Dorsolateral prefrontal cortex (tissue), 120 donors: ENCODE measurements at regions of chr5 and their contacts with region 1.

Region 1: DNA sequence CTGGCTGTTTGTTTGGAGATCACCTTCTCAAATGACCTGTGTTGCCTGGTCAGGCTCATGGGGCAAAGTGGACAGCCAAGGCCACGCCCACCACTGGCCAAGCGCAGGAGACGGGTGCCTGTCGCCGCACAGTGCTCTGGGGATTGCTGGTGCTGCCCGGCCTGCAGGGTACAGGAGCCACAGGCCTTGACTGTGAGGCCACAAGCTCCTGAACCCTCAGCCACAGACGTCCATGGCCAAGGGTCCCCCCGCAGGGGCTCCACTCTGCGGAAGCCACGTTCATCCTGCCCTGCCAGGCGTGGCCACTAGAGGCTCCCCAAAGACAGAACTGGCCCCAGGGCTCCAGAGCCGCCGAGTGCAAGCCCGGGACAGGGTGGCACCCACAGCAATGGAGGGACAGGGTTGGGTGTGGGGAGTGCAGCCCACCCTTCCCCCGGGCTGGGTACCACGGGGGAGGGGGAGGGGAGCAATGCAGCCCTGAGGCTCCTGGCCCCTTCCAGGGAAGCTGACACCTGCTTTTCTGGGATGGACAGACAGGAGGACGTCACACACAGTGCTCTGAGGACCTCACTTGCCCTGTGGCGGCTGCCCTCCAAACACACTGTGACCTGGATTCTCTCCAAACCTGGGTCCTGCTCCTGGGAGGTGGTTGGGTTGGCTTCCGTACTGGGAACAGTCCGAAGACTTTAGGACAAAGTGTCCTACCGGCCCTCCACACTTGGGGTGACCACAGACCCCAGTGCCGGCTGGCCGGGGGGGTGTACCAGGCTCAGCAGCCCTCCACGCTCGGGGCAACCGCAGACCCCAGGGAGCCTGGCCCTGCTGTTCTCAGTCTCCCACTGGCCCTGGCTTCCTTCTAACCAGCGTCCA is 21.5 kb downstream of the TPPP start:
- DNase-seq: peak; percentile 76 to 87 (median 84)
- H3K4me3 ChIP-seq: peak overlapping the region in 44 of 59 donors; percentile 1 to 57 (median 32)
- H3K27ac ChIP-seq: peak overlapping the region; percentile 83 to 100 (median 99)
- H3K27me3 ChIP-seq: peaks cover 0 to 6% (median 0%) of the 10 kb centered on the region in 45 donors
- CTCF ChIP-seq: peak; percentile 64 to 95 (median 86)

Region 2: GRCh38 chr5:691817-692528 is 20.3 kb after region 1 on chr5:
- intact Hi-C with region 1: loop called in 1 of 2 experiments (anchors 2 kb)
- DNase-seq: no peak
- H3K4me3 ChIP-seq: peak overlapping the region in 58 of 59 donors; percentile 34 to 94 (median 66)
- H3K27ac ChIP-seq: peak overlapping the region in 45 of 59 donors; percentile 72 to 97 (median 84)
- H3K27me3 ChIP-seq: no peaks in the 10 kb centered on the region
- CTCF ChIP-seq: no peak

Region 3: DNA sequence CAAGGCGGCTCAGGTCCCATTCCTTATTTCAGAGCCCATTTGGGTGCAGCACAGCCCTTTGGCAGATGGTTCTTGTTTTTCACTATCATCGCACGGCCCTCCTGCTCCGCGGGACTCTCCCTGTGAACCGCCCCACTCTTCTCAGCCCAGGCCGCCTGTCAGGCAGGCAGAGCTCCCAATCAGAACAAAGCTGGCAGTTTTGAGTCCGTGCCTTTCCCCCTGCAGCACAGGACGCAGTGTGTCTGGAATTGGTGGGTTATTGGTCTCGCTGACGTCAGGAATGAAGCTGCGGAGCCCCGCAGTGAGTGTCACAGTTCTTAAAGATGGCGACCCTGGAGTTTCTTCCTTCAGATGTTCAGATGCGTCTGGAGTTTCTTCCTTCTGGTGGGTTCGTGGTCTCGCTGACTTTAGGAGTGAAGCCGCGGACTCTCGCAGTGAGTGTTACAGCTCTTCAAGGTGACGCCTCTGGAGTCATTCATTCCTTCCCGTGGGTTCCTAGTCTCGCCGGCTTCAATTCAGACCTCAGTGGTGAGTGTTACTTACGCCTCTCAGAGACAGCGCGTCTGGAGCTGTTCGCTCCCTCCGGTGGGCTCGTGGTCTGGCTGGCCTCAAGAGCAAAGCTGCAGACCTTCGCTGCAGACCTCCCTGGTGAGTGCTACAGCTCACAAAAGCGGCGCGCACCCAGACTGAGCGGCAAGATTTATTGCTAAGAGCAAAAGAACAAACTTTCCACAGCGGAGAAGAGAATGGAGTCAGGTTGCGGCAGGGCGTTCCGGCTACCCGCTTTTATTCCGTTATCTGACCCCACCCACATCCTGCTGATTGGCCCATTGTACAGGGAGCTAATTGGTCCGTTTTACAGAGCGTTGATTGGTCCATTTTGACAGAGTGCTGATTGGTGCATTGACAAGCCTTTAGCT is 105.4 kb after region 1 on chr5:
- intact Hi-C with region 1: loop called in 1 of 2 experiments (anchors 5 kb)
- DNase-seq: peak in 3 of 10 donors; percentile 27 to 45 (median 33)
- H3K4me3 ChIP-seq: no peak overlapping the region
- H3K27ac ChIP-seq: peak overlapping the region in 12 of 59 donors; percentile 2 to 67 (median 33)
- H3K27me3 ChIP-seq: no peaks in the 10 kb centered on the region
- CTCF ChIP-seq: no peak

Region 4: DNA sequence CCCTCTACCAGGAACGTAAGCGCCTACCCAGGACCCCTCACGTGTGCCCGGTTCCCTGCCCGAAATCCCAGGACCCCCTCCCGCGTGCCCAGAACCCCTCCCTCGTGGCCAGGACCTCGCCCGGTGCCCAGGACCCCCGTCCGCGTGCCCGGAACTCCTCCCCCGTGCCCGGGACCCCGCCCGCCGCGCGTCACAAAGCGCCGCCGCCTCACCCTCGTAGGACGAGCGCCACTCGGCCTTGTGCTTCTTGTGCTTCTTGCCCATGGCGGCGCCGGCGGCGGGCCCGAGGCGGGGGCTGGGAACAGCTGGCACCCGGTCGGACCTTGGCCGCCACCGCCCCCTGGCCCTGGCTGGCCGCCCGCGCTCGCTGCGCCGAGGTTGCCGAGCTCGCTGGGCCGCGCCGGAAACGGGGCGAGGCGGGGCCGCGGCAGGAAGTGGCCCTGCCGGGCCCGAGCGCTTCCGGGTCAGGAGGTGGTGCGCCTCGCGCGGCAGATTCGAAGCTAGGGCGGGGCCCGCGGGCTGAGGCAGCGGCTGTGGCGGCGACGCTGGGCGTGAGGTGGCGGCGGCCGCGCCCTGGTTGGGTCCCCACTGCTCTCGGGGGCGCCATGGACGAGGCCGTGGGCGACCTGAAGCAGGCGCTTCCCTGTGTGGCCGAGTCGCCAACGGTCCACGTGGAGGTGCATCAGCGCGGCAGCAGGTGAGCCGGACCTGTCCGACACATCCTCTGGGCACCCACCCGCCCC is 220.9 kb after region 1 on chr5 and contains the starts of genes BRD9 and TRIP13:
- intact Hi-C with region 1: loop called in 1 of 2 experiments (anchors 5 kb)
- DNase-seq: peak; percentile 40 to 94 (median 80)
- H3K4me3 ChIP-seq: peak within 1 kb of the TSS; percentile 68 to 98 (median 89)
- H3K27ac ChIP-seq: peak within 1 kb of the TSS in 54 of 59 donors; percentile 25 to 88 (median 80)
- H3K27me3 ChIP-seq: no peaks in the 10 kb centered on the region
- CTCF ChIP-seq: peak in 27 of 56 donors; percentile 12 to 67 (median 42)
- total RNA-seq, gene BRD9: 53.0 to 164 (median 82.5) TPM
- total RNA-seq, gene TRIP13: 0.40 to 4.4 (median 1.5) TPM

Region 5: DNA sequence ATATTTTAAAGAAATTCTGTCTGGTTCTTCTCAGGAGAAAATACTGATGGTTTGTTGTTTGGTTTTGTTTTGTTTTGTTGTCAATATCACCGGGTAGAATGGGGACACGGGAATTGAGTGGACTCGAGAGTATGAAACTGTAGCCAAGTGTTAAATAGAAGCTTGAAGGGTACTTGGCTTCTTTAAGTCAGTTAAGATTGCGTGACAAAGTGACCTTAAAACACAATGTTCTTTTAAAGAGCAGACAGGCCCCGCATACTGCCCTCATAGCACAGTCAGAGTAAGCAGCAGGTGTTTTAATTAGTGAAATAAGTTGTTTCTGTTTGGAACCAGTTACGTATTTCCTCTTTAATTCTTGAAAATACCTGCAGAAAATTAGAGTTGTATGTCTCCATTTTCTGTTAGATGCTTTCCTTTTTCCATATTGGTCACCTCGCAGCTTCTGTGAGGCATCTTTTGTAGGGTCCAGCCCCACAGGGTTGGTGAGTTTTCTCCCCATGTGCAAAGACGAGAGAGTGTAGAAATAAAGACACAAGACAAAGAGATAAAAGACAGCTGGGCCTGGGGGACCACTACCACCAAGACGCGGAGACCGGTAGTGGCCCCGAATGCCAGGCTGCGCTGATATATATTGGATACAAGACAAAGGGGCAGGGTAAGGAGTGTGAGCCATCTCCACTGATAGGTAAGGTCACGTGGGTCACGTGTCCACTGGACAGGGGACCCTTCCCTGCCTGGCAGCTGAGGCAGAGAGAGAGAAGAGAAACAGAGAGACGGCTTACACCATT is 230.6 kb after region 1 on chr5:
- intact Hi-C with region 1: loop called in 1 of 2 experiments (anchors 5 kb)
- DNase-seq: no peak
- H3K4me3 ChIP-seq: no peak overlapping the region
- H3K27ac ChIP-seq: peak overlapping the region in 1 of 59 donors; percentile 21
- H3K27me3 ChIP-seq: no peaks in the 10 kb centered on the region
- CTCF ChIP-seq: no peak